Activated CD4-positive, alpha-beta memory T cell treated with anti-CD3 and anti-CD28 coated beads, Interleukin-2, amount 10 ng/mL, durations not matched to agents 7 days and 5 days (primary cell): ENCODE measurements at regions of chr6 and their contacts with region 1.

Region 1: GRCh38 chr6:83221889-83222479 is 28.8 kb downstream of the RWDD2A start:
- DNase-seq: no peak
- H3K4me3 Mint-ChIP-seq: no peak overlapping the region
- H3K27ac Mint-ChIP-seq: no peak overlapping the region
- H3K4me1 Mint-ChIP-seq: no peaks in the 10 kb centered on the region
- H3K27me3 Mint-ChIP-seq: no peaks in the 10 kb centered on the region

Region 2: GRCh38 chr6:83092756-83093399 is 129.1 kb before region 1 on chr6:
- CTCF ChIA-PET with region 1: no interaction called
- POLR2A ChIA-PET with region 1: no interaction called
- DNase-seq: no peak
- H3K4me3 Mint-ChIP-seq: no peak overlapping the region
- H3K27ac Mint-ChIP-seq: no peak overlapping the region
- H3K4me1 Mint-ChIP-seq: peaks cover 5% of the 10 kb centered on the region
- H3K27me3 Mint-ChIP-seq: no peaks in the 10 kb centered on the region

Region 3: DNA sequence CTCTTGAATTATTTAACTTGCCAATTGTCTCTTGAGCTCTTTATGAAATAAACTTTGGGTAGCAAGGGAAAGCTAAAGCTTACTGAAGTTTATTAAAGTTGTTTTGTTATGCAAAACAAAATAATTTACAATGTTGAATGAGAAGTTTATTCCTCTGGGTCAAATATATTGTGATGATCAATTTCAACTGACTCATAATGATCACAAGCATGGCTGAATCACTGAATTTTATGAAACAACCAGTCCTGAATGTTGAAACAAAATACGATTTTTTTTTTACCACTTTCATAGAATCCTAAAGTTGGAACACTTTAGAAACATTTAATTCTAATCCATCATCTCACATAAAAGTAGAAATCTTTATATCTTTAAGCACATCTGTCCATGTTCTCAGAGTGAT is 81.4 kb after region 1 on chr6:
- CTCF ChIA-PET with region 1: no interaction called
- POLR2A ChIA-PET with region 1: no interaction called
- DNase-seq: no peak
- H3K4me3 Mint-ChIP-seq: no peak overlapping the region
- H3K27ac Mint-ChIP-seq: no peak overlapping the region
- H3K4me1 Mint-ChIP-seq: no peaks in the 10 kb centered on the region
- H3K27me3 Mint-ChIP-seq: peaks cover 5% of the 10 kb centered on the region

Region 4: DNA sequence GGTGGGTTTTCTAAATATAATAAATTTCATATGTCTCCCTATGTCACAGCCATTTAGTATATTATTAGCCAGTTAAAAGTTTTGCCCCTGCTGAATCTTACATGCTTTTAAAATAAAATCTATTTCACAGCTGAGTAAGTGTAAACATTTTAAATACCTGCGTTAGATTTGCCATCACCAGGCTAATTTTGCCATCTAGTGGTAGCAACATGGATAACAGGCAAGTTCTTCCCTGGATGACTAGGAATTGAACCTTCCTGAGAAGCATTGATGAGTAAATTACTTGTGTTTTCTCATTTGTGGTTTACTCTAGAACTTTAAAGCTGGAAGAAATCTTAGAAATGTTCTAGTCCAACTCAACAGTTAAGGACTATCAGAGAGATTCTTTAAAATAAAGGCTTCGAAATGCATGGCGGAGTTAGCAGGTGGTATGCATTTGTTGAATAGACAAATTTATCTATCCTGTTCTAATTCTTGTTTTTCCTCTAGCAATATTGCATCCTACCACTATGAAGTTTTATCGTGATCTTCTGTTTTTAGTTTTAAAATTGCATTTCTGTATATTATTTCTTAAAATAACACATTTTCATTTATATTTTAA is 293.0 kb after region 1 on chr6:
- CTCF ChIA-PET with region 1: interaction called, 72 read pairs
- POLR2A ChIA-PET with region 1: no interaction called
- DNase-seq: peak; percentile 20
- H3K4me3 Mint-ChIP-seq: no peak overlapping the region
- H3K27ac Mint-ChIP-seq: no peak overlapping the region
- H3K4me1 Mint-ChIP-seq: peaks cover 6% of the 10 kb centered on the region
- H3K27me3 Mint-ChIP-seq: peaks cover 36% of the 10 kb centered on the region